ENCODE measurements at regions of chr7 and their contacts with region 1.

Region 1: GRCh38 chr7:103074519-103075336 is at the starts of genes ARMC10 and FBXL13:
- DNase-seq: peak; percentile 89 to 96 (median 91)
- H3K4me3 ChIP-seq: peak within 1 kb of the TSS; percentile 81
- H3K27ac ChIP-seq: peak within 1 kb of the TSS; percentile 63 to 88
- H3K4me1 ChIP-seq: peaks cover 6% of the 10 kb centered on the region
- H3K27me3 ChIP-seq: no peaks in the 10 kb centered on the region
- CTCF ChIP-seq: peak; percentile 19 to 67 (median 56)
- EP300 ChIP-seq: peak; percentile 51
- POLR2A ChIP-seq: peak; percentile 41
- total RNA-seq, gene ARMC10: 33.5 to 54.0 (median 52.2) TPM
- total RNA-seq, gene FBXL13: 5.5 to 13.3 (median 6.9) TPM

Region 2: DNA sequence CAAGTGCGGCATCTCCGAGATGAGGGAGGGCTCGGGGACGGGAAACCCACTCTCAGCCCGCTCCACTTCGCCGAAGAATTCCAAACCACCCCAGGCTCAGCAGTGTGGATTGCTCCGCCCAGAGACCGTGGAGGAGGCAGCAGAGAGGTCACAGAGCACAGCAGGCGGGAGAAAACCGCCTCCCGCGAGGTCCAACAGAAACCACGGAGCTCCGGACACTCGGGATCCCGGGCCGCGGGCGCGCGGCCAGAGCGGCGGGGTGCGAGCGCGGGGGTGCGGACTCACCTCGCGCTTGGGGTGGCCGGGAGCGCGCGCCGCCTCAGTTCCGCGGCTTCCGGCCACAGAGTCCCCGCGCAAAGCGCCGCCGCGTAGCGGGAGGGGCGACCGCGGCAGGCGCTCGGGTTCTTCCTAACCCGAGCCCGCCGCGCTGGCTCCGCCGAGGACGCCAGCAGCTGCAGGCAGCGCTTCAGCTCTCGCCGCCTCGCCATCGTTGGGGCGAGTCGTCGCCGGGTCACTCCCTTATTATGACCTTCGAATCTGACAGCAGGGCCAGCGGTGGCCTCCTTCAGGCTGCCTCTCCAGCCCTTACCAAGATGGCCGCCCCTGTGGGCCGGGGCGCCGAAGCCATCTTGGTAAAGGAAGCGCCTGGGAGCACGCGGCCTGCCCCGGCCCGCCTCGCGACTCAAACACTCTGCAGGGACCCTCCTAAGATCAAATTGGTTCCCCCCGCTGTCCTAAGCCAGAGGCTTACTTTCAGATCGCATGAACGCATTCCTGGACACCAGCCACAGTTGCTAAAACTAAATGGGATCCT is 74.5 kb after region 1 on chr7 and contains the start of gene NAPEPLD:
- intact Hi-C with region 1: loop called in 3 of 4 experiments (anchors 5 to 10 kb)
- DNase-seq: peak; percentile 87 to 92 (median 89)
- H3K4me3 ChIP-seq: peak within 1 kb of the TSS; percentile 83
- H3K27ac ChIP-seq: peak within 1 kb of the TSS; percentile 89 to 96
- H3K4me1 ChIP-seq: no peaks in the 10 kb centered on the region
- H3K27me3 ChIP-seq: no peaks in the 10 kb centered on the region
- CTCF ChIP-seq: peak in 1 of 3 donors; percentile 10
- EP300 ChIP-seq: no peak
- POLR2A ChIP-seq: peak; percentile 49
- total RNA-seq, gene NAPEPLD: 19.5 to 27.9 (median 21.5) TPM

Region 3: GRCh38 chr7:104089612-104090011 is 1014.9 kb after region 1 on chr7:
- intact Hi-C with region 1: no loop called
- DNase-seq: no peak
- H3K4me3 ChIP-seq: no peak overlapping the region
- H3K27ac ChIP-seq: no peak overlapping the region
- H3K4me1 ChIP-seq: no peaks in the 10 kb centered on the region
- H3K27me3 ChIP-seq: no peaks in the 10 kb centered on the region
- CTCF ChIP-seq: no peak
- EP300 ChIP-seq: no peak
- POLR2A ChIP-seq: no peak